Right cardiac atrium (tissue), 5 donors: ENCODE measurements at regions of chr10 and their contacts with region 1.

Region 1: DNA sequence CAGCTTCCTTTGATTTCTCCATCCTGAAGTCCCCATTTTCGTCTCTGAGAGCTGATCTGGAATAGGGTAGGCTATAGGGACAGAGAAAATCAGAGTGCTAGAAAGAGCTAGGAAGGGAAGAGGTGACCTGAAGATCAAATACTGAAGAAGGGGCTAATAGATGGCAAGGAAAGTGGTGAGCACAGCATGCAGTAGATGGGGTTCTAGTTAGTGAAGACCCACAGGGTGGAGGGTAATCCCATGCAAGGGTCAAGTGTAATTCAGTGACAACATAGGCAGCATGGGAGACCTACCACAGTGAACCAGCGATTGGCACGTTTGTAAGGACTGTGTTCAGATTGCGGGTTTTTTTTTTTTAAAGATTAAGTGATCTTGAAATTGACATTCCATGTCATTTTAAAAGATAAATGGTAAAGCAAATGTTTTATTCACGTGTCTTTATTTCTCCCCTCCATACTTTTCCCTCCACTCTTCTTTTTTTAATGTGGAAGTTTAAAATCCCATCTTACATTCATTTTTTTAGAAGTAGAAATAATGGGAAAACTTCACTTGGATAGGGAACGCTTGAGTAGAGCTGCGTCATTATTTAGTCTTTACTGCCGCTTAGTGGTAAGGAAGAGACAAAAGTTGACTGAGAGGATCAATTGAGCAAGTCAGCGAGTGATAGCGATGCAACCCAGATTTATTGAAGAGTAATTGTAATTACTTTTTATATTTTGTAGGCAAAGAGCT is 21.0 kb upstream of the ABI1 start:
- DNase-seq: no peak
- ATAC-seq: peak; percentile 68 to 76
- H3K4me3 ChIP-seq: no peak overlapping the region
- H3K27ac ChIP-seq: no peak overlapping the region
- H3K4me1 ChIP-seq: no peaks in the 10 kb centered on the region
- H3K27me3 ChIP-seq: no peaks in the 10 kb centered on the region

Region 2: GRCh38 chr10:26326851-26327250 is 554.9 kb before region 1 on chr10:
- intact Hi-C with region 1: no loop called
- DNase-seq: no peak
- ATAC-seq: no peak
- H3K4me3 ChIP-seq: no peak overlapping the region
- H3K27ac ChIP-seq: no peak overlapping the region
- H3K4me1 ChIP-seq: no peaks in the 10 kb centered on the region
- H3K27me3 ChIP-seq: no peaks in the 10 kb centered on the region

Region 3: GRCh38 chr10:26621889-26622711 is 259.7 kb before region 1 on chr10:
- intact Hi-C with region 1: no loop called
- DNase-seq: peak; percentile 51 to 78 (median 63)
- ATAC-seq: peak; percentile 64 to 77
- H3K4me3 ChIP-seq: peak overlapping the region; percentile 21
- H3K27ac ChIP-seq: no peak overlapping the region
- H3K4me1 ChIP-seq: no peaks in the 10 kb centered on the region
- H3K27me3 ChIP-seq: no peaks in the 10 kb centered on the region

Region 4: GRCh38 chr10:26682931-26683330 is 198.8 kb before region 1 on chr10:
- intact Hi-C with region 1: loop called in 1 of 4 experiments (anchors 10 kb)
- DNase-seq: no peak
- ATAC-seq: no peak
- H3K4me3 ChIP-seq: no peak overlapping the region
- H3K27ac ChIP-seq: no peak overlapping the region
- H3K4me1 ChIP-seq: no peaks in the 10 kb centered on the region
- H3K27me3 ChIP-seq: no peaks in the 10 kb centered on the region

Region 5: GRCh38 chr10:26725837-26726727 is 155.7 kb before region 1 on chr10:
- intact Hi-C with region 1: loop called (anchors 2 to 5 kb)
- DNase-seq: peak; percentile 67 to 84 (median 76)
- ATAC-seq: peak; percentile 60 to 62
- H3K4me3 ChIP-seq: no peak overlapping the region
- H3K27ac ChIP-seq: no peak overlapping the region
- H3K4me1 ChIP-seq: no peaks in the 10 kb centered on the region
- H3K27me3 ChIP-seq: no peaks in the 10 kb centered on the region

Region 6: DNA sequence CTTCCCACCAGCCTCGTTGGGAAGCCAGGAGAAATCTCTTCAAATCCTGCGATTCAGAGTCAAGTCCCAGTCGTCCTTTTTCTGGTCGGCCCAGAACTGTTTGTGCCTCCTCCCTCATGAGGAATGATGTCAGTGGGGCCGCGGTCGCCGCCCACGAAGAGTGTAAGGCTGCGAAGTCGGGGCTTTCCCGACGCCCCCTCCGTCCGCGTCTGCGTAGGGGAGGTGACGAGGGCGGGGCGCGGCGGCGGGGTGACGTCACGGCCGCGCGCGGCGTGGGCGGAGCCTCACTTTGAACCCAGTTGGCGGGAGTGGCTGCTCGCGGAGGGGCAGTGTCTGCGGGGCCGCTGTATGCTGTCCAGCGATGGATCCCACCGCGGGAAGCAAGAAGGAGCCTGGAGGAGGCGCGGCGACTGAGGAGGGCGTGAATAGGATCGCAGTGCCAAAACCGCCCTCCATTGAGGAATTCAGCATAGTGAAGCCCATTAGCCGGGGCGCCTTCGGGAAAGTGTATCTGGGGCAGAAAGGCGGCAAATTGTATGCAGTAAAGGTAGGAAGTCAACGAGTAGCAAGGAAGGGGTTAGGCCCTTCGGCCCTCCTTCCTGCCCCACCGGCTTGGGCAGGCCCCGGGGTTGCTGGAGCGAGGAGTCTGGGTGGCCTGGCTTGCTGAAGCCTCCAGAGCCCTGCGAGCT is 273.4 kb after region 1 on chr10 and contains the start of gene MASTL:
- intact Hi-C with region 1: no loop called
- DNase-seq: peak; percentile 96 to 98 (median 97)
- ATAC-seq: peak; percentile 98
- H3K4me3 ChIP-seq: peak within 1 kb of the TSS; percentile 97
- H3K27ac ChIP-seq: peak within 1 kb of the TSS; percentile 99
- H3K4me1 ChIP-seq: no peaks in the 10 kb centered on the region
- H3K27me3 ChIP-seq: no peaks in the 10 kb centered on the region
- total RNA-seq, gene MASTL: 2.6 to 3.5 (median 2.8) TPM